Esophagus muscularis mucosa (tissue), 4 donors: ENCODE measurements at regions of chr12 and their contacts with region 1.

Region 1: GRCh38 chr12:50074936-50075807 is 10.0 kb upstream of the SMARCD1 start:
- DNase-seq: peak; percentile 95
- H3K4me3 ChIP-seq: no peak overlapping the region
- H3K27ac ChIP-seq: no peak overlapping the region
- H3K4me1 ChIP-seq: peaks cover 3 to 17% (median 13%) of the 10 kb centered on the region in 4 donors
- H3K27me3 ChIP-seq: no peaks in the 10 kb centered on the region
- CTCF ChIP-seq: peak in 2 of 3 experiments; percentile 91 to 98
- EP300 ChIP-seq: no peak
- POLR2A ChIP-seq: no peak

Region 2: DNA sequence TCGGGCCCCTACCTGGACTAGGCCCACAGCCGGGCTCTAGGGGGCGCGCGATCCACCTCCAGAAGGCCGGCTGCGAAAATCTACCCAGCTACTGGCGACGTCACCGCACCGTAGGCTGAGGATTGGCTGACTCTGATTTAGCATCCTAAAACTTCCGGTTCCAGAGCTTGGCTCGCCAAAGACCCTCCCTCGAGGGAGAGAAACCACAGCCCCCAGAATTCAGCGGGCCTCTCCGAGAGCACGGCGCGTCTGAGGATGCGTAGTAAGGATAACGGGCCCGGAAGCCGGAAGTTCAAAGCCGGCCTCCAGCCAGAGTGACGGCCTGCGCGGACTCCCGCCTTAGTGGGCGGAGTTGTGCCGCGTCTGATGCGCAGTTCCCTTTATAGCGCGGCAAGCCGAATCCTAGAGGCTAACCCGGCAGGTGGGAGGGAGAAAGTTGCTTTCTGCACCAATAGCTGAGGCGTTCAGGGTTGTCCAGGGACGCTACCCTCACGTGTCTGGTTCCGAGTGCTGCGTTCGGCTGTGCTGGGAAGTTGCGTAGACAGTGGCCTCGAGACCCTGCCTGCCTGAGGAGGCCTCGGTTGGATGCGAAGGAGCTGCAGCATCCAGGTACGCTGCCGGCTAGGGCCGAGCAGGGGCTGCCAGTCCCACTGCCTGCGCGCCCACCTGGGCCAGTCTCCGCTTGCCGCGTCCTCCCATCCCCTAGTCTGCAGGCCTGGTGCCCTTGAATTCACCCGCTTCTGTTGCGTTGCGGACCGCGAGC is 36.7 kb after region 1 on chr12 and contains the start of gene COX14:
- intact Hi-C with region 1: no loop called
- DNase-seq: peak; percentile 99
- H3K4me3 ChIP-seq: peak within 1 kb of the TSS; percentile 82 to 97 (median 85)
- H3K27ac ChIP-seq: peak within 1 kb of the TSS; percentile 95 to 98 (median 97)
- H3K4me1 ChIP-seq: peaks cover 50 to 69% (median 57%) of the 10 kb centered on the region in 4 donors
- H3K27me3 ChIP-seq: no peaks in the 10 kb centered on the region
- CTCF ChIP-seq: peak; percentile 85 to 93 (median 87)
- EP300 ChIP-seq: peak; percentile 62
- POLR2A ChIP-seq: peak; percentile 95
- total RNA-seq, gene COX14: 52.8 to 105 (median 87.6) TPM

Region 3: DNA sequence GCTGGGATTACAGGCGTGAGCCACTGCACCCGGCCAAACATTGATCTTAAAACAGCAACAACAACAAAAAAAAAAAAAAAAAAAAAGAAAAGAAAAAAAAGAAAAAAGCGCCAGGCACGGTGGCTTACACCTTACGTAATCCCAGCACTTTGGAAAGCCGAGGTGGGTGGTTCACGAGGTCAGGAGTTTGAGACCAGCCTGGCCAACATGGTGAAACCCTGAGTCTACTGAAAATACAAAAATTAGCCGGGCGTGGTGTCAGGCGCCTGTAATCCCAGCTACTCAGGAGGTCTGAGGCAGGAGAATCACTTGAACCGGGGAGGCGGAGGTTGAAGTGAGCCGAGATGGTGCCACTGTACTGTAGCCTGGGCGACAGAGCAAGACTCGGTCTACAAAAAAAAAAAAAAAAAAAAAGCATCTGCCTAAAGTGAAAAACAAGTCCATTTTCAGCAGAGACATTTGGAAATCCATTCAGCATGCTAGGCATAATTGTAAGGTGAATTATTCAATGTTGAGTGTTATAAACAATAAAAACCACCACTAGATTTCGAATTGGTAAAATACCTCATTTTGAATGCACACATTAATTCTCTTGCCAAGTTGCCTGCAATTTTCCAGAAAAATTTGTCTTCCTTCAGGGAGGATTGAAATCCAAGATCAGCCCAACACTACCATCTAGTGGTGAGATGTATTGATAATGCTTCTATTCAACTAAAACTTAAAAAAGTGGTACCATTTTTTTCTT is 100.0 kb after region 1 on chr12:
- intact Hi-C with region 1: loop called (anchors 2 kb)
- DNase-seq: no peak
- H3K4me3 ChIP-seq: no peak overlapping the region
- H3K27ac ChIP-seq: peak overlapping the region in 1 of 4 donors; percentile 36
- H3K4me1 ChIP-seq: peaks cover 0 to 6% (median 2%) of the 10 kb centered on the region in 4 donors
- H3K27me3 ChIP-seq: no peaks in the 10 kb centered on the region
- CTCF ChIP-seq: peak; percentile 65 to 71 (median 69)
- EP300 ChIP-seq: no peak
- POLR2A ChIP-seq: no peak

Region 4: GRCh38 chr12:50314629-50315312 is 239.6 kb after region 1 on chr12:
- intact Hi-C with region 1: loop called (anchors 5 kb)
- DNase-seq: no peak
- H3K4me3 ChIP-seq: no peak overlapping the region
- H3K27ac ChIP-seq: no peak overlapping the region
- H3K4me1 ChIP-seq: peaks cover 0 to 11% (median 6%) of the 10 kb centered on the region in 4 donors
- H3K27me3 ChIP-seq: no peaks in the 10 kb centered on the region
- CTCF ChIP-seq: peak; percentile 45 to 57 (median 51)
- EP300 ChIP-seq: no peak
- POLR2A ChIP-seq: no peak